Endothelial cell of umbilical vein (primary cell): ENCODE measurements at regions of chr11 and their contacts with region 1.

Region 1: GRCh38 chr11:66480117-66480938 is at the start of gene DPP3:
- DNase-seq: peak; percentile 98
- H3K4me3 ChIP-seq: peak within 1 kb of the TSS; percentile 71 to 89 (median 86)
- H3K27ac ChIP-seq: peak within 1 kb of the TSS; percentile 96
- H3K4me1 ChIP-seq: peaks cover 10% of the 10 kb centered on the region
- H3K27me3 ChIP-seq: no peaks in the 10 kb centered on the region
- CTCF ChIP-seq: no peak
- POLR2A ChIP-seq: peak; percentile 96
- total RNA-seq, gene DPP3: 46.4 and 56.0 TPM in 2 replicates

Region 2: DNA sequence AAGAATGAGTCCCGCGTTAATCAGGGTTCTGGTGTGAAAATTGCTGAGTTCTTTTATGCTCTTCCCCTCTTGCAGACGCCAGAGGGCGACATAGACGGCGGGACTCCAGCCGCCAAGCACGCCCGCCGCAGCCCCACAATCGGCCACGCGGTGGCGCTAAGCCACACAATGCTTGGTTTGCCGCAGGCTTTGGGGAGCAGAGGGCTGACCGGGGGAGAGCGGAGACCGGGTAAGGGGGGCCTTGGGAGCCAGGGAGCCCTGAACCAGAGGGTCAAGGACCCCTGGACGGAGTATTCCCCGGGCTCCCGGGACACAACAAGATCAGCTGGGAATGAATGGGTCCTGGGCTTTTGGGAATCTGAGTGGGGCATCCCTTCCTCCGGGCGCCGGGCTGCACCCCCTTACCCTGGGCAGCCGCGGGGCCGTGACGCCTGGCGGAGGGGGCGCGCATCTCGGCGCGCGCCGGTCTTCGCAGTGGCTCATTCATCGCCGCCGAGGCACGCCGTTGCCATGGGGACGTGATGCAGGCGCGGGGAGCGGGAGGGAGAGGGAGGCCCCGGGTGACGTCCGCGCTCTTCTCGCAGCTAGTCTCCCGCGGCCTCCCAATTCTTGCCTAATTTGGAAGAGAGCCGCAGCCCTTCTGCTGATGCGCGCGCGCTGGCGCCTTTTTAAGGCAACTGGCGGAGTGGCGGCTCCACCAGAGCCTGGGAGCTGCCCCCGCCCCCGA is 71.7 kb before region 1 on chr11:
- CTCF ChIA-PET with region 1: interaction called, 8 read pairs
- POLR2A ChIA-PET with region 1: no interaction called
- dilution Hi-C with region 1: no loop called
- intact Hi-C with region 1: loop called (anchors 1 kb)
- DNase-seq: peak; percentile 82
- H3K4me3 ChIP-seq: no peak overlapping the region
- H3K27ac ChIP-seq: no peak overlapping the region
- H3K4me1 ChIP-seq: no peaks in the 10 kb centered on the region
- H3K27me3 ChIP-seq: peaks cover 8 to 10% of the 10 kb centered on the region in 2 experiments
- CTCF ChIP-seq: peak; percentile 100
- POLR2A ChIP-seq: no peak

Region 3: GRCh38 chr11:66438504-66439466 is 41.5 kb before region 1 on chr11 and contains the start of gene MRPL11:
- CTCF ChIA-PET with region 1: interaction called, 10 read pairs
- POLR2A ChIA-PET with region 1: no interaction called
- dilution Hi-C with region 1: no loop called
- intact Hi-C with region 1: no loop called
- DNase-seq: peak; percentile 95
- H3K4me3 ChIP-seq: peak within 1 kb of the TSS; percentile 59 to 80 (median 64)
- H3K27ac ChIP-seq: peak within 1 kb of the TSS; percentile 77
- H3K4me1 ChIP-seq: peaks cover 6% of the 10 kb centered on the region
- H3K27me3 ChIP-seq: no peaks in the 10 kb centered on the region
- CTCF ChIP-seq: peak; percentile 70 to 77
- POLR2A ChIP-seq: no peak
- total RNA-seq, gene MRPL11: 69.1 and 72.1 TPM in 2 replicates

Region 4: DNA sequence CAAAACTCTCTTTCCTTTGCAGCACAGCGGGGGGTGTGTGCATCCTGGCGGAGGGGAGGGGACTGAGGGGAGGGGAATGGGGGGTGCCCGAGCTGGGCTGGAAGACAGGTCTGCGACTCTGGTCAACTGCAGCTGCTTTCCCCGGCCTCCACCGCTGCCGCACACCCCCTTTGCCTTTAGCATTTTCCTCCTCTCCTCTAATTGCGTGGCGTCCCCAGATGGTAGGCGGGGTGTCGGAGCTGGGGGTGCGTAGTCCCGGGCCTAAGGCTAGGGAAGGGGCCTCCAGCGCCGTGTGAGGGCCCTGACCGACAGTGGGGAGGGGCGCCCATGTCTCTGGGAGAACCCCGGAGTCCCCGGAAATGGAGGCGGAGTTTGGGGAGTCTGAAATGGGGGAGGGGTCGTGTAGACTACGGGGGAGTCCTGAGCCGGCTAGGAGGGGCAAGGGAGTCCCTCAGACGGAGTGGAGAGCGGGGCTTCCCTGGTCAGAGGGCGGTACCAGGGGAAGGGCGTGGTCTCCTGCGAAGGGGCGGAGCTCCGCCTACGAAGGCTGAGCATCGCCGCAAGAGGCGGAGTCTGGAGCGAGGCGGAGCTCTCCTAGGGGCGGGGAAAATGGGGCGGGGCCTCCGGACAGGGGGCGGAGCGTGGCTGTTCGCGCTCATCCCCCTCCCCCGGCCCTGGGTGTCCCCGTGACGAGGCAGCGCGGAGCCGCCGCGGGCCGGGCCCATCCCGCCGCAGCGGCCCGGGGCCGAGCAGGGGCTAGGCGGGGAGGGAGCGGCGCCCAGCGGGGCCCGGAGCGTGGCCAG is 13.9 kb before region 1 on chr11 and contains the start of gene PELI3:
- CTCF ChIA-PET with region 1: interaction called, 12 read pairs
- POLR2A ChIA-PET with region 1: interaction called, 15 read pairs
- dilution Hi-C with region 1: no loop called
- intact Hi-C with region 1: loop called (anchors 1 kb)
- DNase-seq: peak; percentile 90
- H3K4me3 ChIP-seq: peak within 1 kb of the TSS; percentile 63 to 83 (median 65)
- H3K27ac ChIP-seq: no peak within 1 kb of the TSS
- H3K4me1 ChIP-seq: peaks cover 10% of the 10 kb centered on the region
- H3K27me3 ChIP-seq: peaks cover 0 to 2% of the 10 kb centered on the region in 2 experiments
- CTCF ChIP-seq: no peak
- POLR2A ChIP-seq: no peak
- total RNA-seq, gene PELI3: 2.9 and 5.5 TPM in 2 replicates

Region 5: DNA sequence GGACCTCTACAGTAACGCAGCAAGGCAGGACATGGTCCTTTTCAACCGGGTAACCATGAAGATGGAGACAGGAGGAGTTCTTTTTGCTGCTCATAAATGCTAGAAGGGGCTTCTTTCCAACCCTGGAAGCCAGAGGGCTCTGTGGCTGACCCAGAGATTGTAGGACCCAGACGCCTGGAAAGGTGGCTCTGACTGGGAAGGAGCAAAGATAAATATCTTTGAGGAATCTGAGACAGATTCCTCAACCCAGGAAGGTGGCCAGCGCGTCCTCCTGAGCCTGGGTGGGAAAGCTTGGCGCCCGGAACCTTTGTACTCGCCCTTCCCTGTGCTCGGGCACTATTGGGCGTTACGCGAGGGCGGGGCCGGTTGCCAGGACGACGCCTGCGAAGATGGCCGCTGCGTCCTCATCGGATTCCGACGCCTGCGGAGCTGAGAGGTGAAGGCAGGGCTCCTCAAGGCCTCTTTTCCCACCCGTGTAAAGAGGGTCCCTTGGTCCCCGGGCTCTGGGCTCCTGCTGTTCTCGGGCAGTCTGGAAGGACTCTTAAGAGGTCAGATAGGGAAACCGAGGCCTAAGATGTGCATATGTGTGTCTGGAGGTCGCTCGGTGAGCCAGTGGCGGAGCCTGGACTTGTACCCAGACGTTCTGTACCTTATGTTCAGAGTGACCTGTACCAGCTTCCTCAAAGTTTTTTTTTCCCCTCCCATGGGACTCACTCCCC is 30.1 kb after region 1 on chr11 and contains the start of gene BBS1:
- CTCF ChIA-PET with region 1: interaction called, 3 read pairs
- POLR2A ChIA-PET with region 1: no interaction called
- dilution Hi-C with region 1: no loop called
- intact Hi-C with region 1: loop called (anchors 1 kb)
- DNase-seq: peak; percentile 84
- H3K4me3 ChIP-seq: peak within 1 kb of the TSS; percentile 56 to 91 (median 89)
- H3K27ac ChIP-seq: peak within 1 kb of the TSS; percentile 34
- H3K4me1 ChIP-seq: peaks cover 5% of the 10 kb centered on the region
- H3K27me3 ChIP-seq: no peaks in the 10 kb centered on the region
- CTCF ChIP-seq: no peak
- POLR2A ChIP-seq: peak; percentile 82
- total RNA-seq, gene BBS1: 29.5 and 32.9 TPM in 2 replicates

Region 6: DNA sequence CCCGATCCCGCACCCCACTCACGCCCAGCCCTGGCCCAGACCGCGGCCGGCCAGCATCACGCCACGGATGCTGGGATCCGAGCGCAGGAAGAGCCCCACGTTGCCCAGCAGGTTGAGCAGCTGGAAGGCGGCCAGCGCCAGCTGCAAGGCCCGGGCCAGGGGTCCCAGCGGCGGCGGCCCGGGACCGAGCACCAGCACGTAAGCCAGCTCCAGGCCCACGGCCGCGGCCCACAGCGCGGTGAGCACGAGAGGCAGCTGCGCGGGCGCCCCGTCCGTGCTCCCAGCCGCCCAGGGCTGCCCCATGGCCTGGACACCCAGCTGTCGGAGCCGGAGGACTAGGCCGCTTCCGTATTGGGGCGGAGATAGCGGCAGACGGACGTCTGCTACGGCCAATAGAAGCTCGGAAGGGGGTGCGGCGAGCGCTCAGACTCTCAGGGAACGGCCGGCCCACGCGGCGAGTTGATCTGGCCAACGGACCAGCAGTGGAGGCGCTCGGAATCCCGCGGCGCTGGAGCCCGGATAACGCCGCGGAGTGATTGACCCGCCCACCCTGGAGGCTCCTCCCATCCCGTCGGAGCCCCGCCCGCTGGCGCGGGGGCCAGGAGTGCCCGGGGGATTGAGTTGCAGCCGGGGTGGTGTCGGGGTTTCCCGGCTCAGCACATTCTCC is 65.5 kb after region 1 on chr11 and contains the start of gene ZDHHC24:
- CTCF ChIA-PET with region 1: no interaction called
- POLR2A ChIA-PET with region 1: no interaction called
- dilution Hi-C with region 1: no loop called
- intact Hi-C with region 1: loop called (anchors 2 kb)
- DNase-seq: peak; percentile 99
- H3K4me3 ChIP-seq: peak within 1 kb of the TSS; percentile 70 to 81 (median 78)
- H3K27ac ChIP-seq: peak within 1 kb of the TSS; percentile 62
- H3K4me1 ChIP-seq: peaks cover 33% of the 10 kb centered on the region
- H3K27me3 ChIP-seq: no peaks in the 10 kb centered on the region
- CTCF ChIP-seq: no peak
- POLR2A ChIP-seq: peak; percentile 90
- total RNA-seq, gene ZDHHC24: 18.3 and 20.1 TPM in 2 replicates